ENCODE measurements at regions of chr7 and their contacts with region 1.

Region 1: GRCh38 chr7:66114793-66115649 is at the start of gene CRCP:
- DNase-seq: peak; percentile 91
- ATAC-seq: peak; percentile 91
- H3K4me3 Mint-ChIP-seq: peak within 1 kb of the TSS; percentile 95
- H3K27ac Mint-ChIP-seq: peak within 1 kb of the TSS; percentile 98
- H3K4me1 Mint-ChIP-seq: peaks cover 39% of the 10 kb centered on the region
- H3K27me3 Mint-ChIP-seq: no peaks in the 10 kb centered on the region
- total RNA-seq, gene CRCP: 24.5 to 27.2 TPM

Region 2: GRCh38 chr7:65750511-65751344 is 364.3 kb before region 1 on chr7:
- CTCF ChIA-PET with region 1: no interaction called
- POLR2A ChIA-PET with region 1: interaction called, 6 read pairs
- intact Hi-C with region 1: loop called in 1 of 2 experiments (anchors 2 kb)
- DNase-seq: peak; percentile 93
- ATAC-seq: peak; percentile 99
- H3K4me3 Mint-ChIP-seq: peak overlapping the region; percentile 95
- H3K27ac Mint-ChIP-seq: peak overlapping the region; percentile 94
- H3K4me1 Mint-ChIP-seq: peaks cover 31% of the 10 kb centered on the region
- H3K27me3 Mint-ChIP-seq: no peaks in the 10 kb centered on the region

Region 3: GRCh38 chr7:65892835-65893234 is 222.2 kb before region 1 on chr7:
- CTCF ChIA-PET with region 1: no interaction called
- POLR2A ChIA-PET with region 1: no interaction called
- intact Hi-C with region 1: no loop called
- DNase-seq: no peak
- ATAC-seq: no peak
- H3K4me3 Mint-ChIP-seq: no peak overlapping the region
- H3K27ac Mint-ChIP-seq: no peak overlapping the region
- H3K4me1 Mint-ChIP-seq: peaks cover 3% of the 10 kb centered on the region
- H3K27me3 Mint-ChIP-seq: no peaks in the 10 kb centered on the region

Region 4: GRCh38 chr7:66075590-66076461 is 39.2 kb before region 1 on chr7 and contains the start of gene ASL:
- CTCF ChIA-PET with region 1: no interaction called
- POLR2A ChIA-PET with region 1: interaction called, 5 read pairs
- intact Hi-C with region 1: loop called (anchors 1 kb)
- DNase-seq: peak; percentile 94
- ATAC-seq: peak; percentile 99
- H3K4me3 Mint-ChIP-seq: peak within 1 kb of the TSS; percentile 63
- H3K27ac Mint-ChIP-seq: no peak within 1 kb of the TSS
- H3K4me1 Mint-ChIP-seq: peaks cover 15% of the 10 kb centered on the region
- H3K27me3 Mint-ChIP-seq: no peaks in the 10 kb centered on the region
- total RNA-seq, gene ASL: 12.7 to 18.5 TPM

Region 5: GRCh38 chr7:66088861-66089838 is 25.9 kb before region 1 on chr7:
- CTCF ChIA-PET with region 1: no interaction called
- POLR2A ChIA-PET with region 1: no interaction called
- intact Hi-C with region 1: no loop called
- DNase-seq: no peak
- ATAC-seq: no peak
- H3K4me3 Mint-ChIP-seq: no peak overlapping the region
- H3K27ac Mint-ChIP-seq: no peak overlapping the region
- H3K4me1 Mint-ChIP-seq: no peaks in the 10 kb centered on the region
- H3K27me3 Mint-ChIP-seq: no peaks in the 10 kb centered on the region

Region 6: GRCh38 chr7:66150471-66150870 is 35.5 kb after region 1 on chr7:
- CTCF ChIA-PET with region 1: interaction called, 4 read pairs
- POLR2A ChIA-PET with region 1: no interaction called
- intact Hi-C with region 1: loop called in 1 of 2 experiments (anchors 2 kb)
- DNase-seq: no peak
- ATAC-seq: no peak
- H3K4me3 Mint-ChIP-seq: no peak overlapping the region
- H3K27ac Mint-ChIP-seq: peak overlapping the region; percentile 29
- H3K4me1 Mint-ChIP-seq: peaks cover 24% of the 10 kb centered on the region
- H3K27me3 Mint-ChIP-seq: no peaks in the 10 kb centered on the region

Region 7: DNA sequence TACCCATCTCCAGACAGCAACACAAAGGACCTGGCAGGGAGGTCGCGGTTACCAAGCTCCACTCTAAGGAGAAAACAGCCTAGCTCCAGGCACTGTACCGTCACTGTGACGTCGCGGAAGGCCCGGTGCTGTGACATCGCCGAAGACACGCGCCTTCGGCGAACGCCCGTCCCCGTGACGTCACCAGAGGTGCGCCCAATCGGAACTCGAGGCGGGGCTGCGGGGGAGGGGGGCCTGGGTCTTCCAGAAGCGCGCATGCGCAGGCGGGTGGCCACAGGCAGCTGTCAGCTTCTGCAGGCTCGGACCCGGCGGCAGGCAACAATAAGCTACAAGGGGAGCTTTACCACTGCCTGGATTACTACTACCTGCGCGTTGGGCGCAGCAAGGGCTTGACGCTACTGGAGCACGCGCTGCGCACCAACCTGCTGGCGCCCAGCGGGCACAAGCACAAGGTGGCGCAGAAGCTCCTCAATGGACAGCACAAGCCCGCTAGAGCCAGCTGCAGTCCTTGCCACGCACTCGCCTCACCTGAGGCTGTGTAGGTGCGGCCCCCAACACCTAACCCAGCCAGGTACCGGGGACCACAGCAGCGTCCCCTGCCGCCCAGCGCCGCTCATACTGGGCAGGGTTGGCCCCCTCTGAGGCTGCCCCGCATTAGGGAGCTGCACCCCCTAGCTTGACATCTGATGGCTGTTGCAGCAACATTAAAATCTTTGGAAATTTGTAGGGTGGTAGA is 298.5 kb after region 1 on chr7:
- CTCF ChIA-PET with region 1: no interaction called
- POLR2A ChIA-PET with region 1: no interaction called
- intact Hi-C with region 1: loop called in 1 of 2 experiments (anchors 5 kb)
- DNase-seq: peak; percentile 93
- ATAC-seq: peak; percentile 89
- H3K4me3 Mint-ChIP-seq: peak overlapping the region; percentile 64
- H3K27ac Mint-ChIP-seq: no peak overlapping the region
- H3K4me1 Mint-ChIP-seq: peaks cover 7% of the 10 kb centered on the region
- H3K27me3 Mint-ChIP-seq: no peaks in the 10 kb centered on the region

Region 8: DNA sequence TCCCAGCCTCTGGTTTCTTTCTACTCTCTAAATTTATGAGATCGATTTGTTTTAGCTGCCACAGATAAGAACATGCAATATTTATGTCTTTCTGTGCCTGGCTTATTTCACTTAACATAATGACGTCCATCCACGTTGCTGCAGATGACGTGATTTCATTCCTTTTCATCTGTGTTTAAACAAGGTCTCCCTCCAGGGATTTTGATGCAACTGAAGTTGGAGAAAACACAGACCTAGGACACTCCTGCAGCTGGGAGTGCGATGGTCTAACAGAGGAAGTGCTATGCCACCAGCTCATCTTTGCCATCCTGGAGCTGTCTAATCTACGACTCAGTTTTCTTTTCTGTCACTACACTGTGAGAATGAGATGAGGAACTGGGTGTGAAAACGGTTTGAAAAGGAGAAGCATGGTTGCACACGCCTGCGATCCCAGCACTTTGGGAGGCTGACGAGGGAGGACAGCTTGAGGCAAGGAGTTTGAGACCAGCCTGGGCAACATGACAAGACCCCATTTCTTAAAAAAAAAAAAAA is 512.2 kb after region 1 on chr7:
- CTCF ChIA-PET with region 1: no interaction called
- POLR2A ChIA-PET with region 1: no interaction called
- intact Hi-C with region 1: no loop called
- DNase-seq: no peak
- ATAC-seq: no peak
- H3K4me3 Mint-ChIP-seq: peak overlapping the region; percentile 82
- H3K27ac Mint-ChIP-seq: peak overlapping the region; percentile 74
- H3K4me1 Mint-ChIP-seq: peaks cover 38% of the 10 kb centered on the region
- H3K27me3 Mint-ChIP-seq: peaks cover 2% of the 10 kb centered on the region

Measured in activated CD4-positive, alpha-beta T cell treated with anti-CD3 and anti-CD28 coated beads for 36 hours (primary cell).